ENCODE measurements at regions of chr11 and their contacts with region 1.

Region 1: GRCh38 chr11:112280268-112281126 is 19.8 kb upstream of the PLET1 start:
- DNase-seq: peak; percentile 78
- ATAC-seq: peak; percentile 95
- H3K4me3 Mint-ChIP-seq: peak overlapping the region; percentile 82
- H3K27ac Mint-ChIP-seq: peak overlapping the region; percentile 74
- H3K4me1 Mint-ChIP-seq: peaks cover 7% of the 10 kb centered on the region
- H3K27me3 Mint-ChIP-seq: no peaks in the 10 kb centered on the region
- CTCF ChIP-seq: peak; percentile 49

Region 2: DNA sequence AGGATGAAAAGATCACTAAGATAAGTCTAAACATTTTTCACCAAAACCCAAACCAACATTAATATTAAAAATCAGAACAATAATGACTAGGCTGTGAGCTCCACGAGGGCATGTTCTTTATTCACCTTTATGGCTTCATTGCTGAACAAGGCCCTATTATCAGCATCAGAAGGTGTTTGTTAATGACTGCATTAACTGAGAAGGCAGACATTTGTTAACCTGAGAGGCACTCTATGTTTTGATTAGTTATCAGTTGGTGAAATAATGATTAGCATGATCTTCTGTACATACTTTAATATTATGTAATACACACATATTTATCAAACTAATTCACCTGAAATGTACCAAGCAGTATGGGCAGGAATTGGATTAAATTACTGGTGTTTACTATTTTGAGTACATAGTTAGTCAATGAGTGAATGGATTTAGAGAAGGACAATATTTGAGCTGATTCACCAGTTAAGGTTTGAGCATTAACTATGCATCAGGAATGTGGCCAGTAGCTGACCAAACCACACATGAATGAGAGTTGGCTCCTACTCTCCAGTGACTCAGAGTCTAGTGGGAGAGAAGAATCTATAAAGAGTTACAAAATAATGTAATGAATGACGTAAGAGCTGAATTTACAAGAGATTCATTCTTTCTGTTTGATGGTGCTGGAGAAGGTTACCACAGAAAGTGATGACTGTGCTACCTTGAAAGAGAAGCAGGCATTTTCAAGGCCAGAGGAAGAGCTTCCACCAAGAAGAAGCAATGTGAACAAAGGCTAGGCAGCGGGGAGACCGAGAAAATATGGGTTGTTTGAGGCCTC is 123.3 kb before region 1 on chr11:
- CTCF ChIA-PET with region 1: no interaction called
- POLR2A ChIA-PET with region 1: no interaction called
- intact Hi-C with region 1: no loop called
- DNase-seq: peak; percentile 2
- ATAC-seq: peak; percentile 64
- H3K4me3 Mint-ChIP-seq: no peak overlapping the region
- H3K27ac Mint-ChIP-seq: no peak overlapping the region
- H3K4me1 Mint-ChIP-seq: peaks cover 2% of the 10 kb centered on the region
- H3K27me3 Mint-ChIP-seq: peaks cover 4% of the 10 kb centered on the region
- CTCF ChIP-seq: no peak

Region 3: GRCh38 chr11:112219476-112220232 is 60.8 kb before region 1 on chr11:
- CTCF ChIA-PET with region 1: interaction called, 208 read pairs
- POLR2A ChIA-PET with region 1: no interaction called
- intact Hi-C with region 1: loop called (anchors 1 kb)
- DNase-seq: peak; percentile 54
- ATAC-seq: peak; percentile 100
- H3K4me3 Mint-ChIP-seq: no peak overlapping the region
- H3K27ac Mint-ChIP-seq: no peak overlapping the region
- H3K4me1 Mint-ChIP-seq: peaks cover 5% of the 10 kb centered on the region
- H3K27me3 Mint-ChIP-seq: no peaks in the 10 kb centered on the region
- CTCF ChIP-seq: peak; percentile 62

Region 4: GRCh38 chr11:112231952-112232351 is 48.5 kb before region 1 on chr11:
- CTCF ChIA-PET with region 1: interaction called, 37 read pairs
- POLR2A ChIA-PET with region 1: interaction called, 4 read pairs
- intact Hi-C with region 1: no loop called
- DNase-seq: no peak
- ATAC-seq: no peak
- H3K4me3 Mint-ChIP-seq: no peak overlapping the region
- H3K27ac Mint-ChIP-seq: no peak overlapping the region
- H3K4me1 Mint-ChIP-seq: peaks cover 12% of the 10 kb centered on the region
- H3K27me3 Mint-ChIP-seq: no peaks in the 10 kb centered on the region
- CTCF ChIP-seq: no peak

Region 5: GRCh38 chr11:112265721-112266409 is 14.6 kb before region 1 on chr11:
- CTCF ChIA-PET with region 1: interaction called, 16 read pairs
- POLR2A ChIA-PET with region 1: no interaction called
- intact Hi-C with region 1: no loop called
- DNase-seq: no peak
- ATAC-seq: no peak
- H3K4me3 Mint-ChIP-seq: no peak overlapping the region
- H3K27ac Mint-ChIP-seq: no peak overlapping the region
- H3K4me1 Mint-ChIP-seq: no peaks in the 10 kb centered on the region
- H3K27me3 Mint-ChIP-seq: no peaks in the 10 kb centered on the region
- CTCF ChIP-seq: no peak

Region 6: DNA sequence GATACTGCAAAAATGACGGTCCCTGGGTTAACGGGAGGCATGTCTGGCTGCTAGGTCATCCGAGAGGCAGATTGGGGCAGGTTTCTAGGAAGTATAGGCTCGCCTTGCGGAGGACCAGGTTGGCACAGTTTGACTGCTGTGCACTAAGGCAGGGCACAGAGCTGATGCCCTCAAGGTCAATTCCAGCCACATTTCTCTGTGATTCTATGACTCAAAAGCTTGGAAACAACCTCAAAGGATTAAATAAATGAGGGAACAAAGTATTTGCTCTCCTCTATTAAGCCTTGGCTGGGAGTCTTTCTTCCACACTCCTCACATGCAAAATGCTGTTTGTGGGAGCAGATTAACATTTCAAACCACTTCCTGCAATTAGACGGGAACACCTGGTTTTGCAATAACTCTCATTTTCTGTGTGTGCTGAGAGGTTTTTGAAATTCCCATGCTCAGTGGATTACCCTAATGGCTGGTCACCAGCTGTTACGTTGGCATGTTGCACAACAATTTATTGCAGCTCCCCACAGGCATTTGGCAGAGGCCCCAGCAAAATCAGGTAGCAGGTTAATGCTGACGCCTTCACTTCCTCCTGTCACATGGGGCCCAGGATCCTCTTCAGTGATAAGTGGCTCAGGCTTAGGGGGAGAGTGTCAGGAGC is 41.1 kb after region 1 on chr11:
- CTCF ChIA-PET with region 1: no interaction called
- POLR2A ChIA-PET with region 1: no interaction called
- intact Hi-C with region 1: no loop called
- DNase-seq: peak; percentile 5
- ATAC-seq: no peak
- H3K4me3 Mint-ChIP-seq: no peak overlapping the region
- H3K27ac Mint-ChIP-seq: no peak overlapping the region
- H3K4me1 Mint-ChIP-seq: peaks cover 11% of the 10 kb centered on the region
- H3K27me3 Mint-ChIP-seq: no peaks in the 10 kb centered on the region
- CTCF ChIP-seq: no peak

Region 7: DNA sequence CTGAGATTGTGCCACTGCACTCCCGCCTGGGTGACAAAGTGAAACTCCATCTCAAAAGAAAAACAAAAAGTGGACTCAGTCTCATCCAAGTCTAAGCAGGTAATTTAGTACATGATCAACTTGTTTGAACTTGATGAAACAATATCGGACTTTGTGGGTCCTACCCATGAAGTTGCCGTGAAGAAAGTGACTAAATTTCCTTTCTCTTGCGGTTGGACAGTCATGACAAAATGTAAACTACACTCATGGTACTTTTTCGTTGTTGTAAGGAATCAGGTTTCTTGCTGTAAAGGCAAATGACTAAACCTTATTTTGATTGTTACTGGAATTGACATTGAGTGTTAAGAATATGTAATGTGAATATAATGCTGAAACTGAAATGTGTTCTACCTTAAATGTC is 144.6 kb after region 1 on chr11:
- CTCF ChIA-PET with region 1: no interaction called
- POLR2A ChIA-PET with region 1: no interaction called
- intact Hi-C with region 1: no loop called
- DNase-seq: no peak
- ATAC-seq: no peak
- H3K4me3 Mint-ChIP-seq: no peak overlapping the region
- H3K27ac Mint-ChIP-seq: no peak overlapping the region
- H3K4me1 Mint-ChIP-seq: no peaks in the 10 kb centered on the region
- H3K27me3 Mint-ChIP-seq: peaks cover 7% of the 10 kb centered on the region
- CTCF ChIP-seq: no peak

Measured in activated CD8-positive, alpha-beta T cell treated with anti-CD3 and anti-CD28 coated beads for 36 hours (primary cell).